Endothelial cell of umbilical vein (primary cell): ENCODE measurements at regions of chr12 and their contacts with region 1.

Region 1: GRCh38 chr12:57069523-57069922 is 9.1 kb downstream of the NEMP1 start:
- DNase-seq: peak; percentile 80
- H3K4me3 ChIP-seq: no peak overlapping the region
- H3K27ac ChIP-seq: no peak overlapping the region
- H3K4me1 ChIP-seq: no peaks in the 10 kb centered on the region
- H3K27me3 ChIP-seq: no peaks in the 10 kb centered on the region
- CTCF ChIP-seq: peak; percentile 75 to 80
- POLR2A ChIP-seq: no peak

Region 2: DNA sequence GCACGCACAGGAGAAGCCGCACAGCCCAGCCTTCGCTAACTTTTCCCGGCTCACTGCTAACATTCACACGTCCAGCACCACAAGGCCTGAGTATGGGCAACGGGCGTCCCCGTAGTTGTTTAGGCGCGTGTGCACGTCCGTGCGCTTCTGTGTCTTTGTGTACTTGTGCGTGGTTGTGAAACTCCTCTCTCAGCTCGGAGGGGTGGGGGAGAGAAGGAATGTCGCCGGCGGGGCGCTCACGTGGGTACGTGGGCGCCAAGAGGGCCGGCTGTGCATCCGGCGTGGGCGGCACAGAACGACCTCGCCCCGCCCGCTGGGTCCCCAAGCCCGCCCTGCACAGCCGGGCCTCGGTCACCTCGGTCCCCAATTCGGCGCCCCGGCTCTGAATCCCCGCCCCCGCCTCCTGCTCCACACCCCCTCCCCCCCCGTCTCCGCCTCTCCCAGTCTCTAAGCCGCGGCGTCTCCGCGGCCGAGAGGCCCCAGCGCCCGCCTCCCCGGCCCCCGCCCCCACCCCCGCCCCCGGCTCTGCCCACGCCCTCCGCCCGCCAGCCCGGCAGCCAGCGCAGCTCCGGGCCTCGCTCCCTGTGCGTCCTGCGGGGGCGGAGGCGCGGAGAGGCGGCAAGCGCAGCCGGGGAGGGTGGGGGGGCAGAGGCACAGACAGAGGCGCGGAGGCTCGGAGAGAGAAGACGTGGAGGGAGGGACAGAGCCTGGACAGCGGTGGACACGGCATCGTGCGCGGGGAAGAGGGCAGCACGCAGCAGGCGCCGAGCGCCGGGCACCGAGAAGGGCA is 19.1 kb after region 1 on chr12 and contains the start of gene NAB2:
- CTCF ChIA-PET with region 1: interaction called, 122 read pairs
- POLR2A ChIA-PET with region 1: interaction called, 3 read pairs
- dilution Hi-C with region 1: no loop called
- intact Hi-C with region 1: loop called (anchors 1 kb)
- DNase-seq: peak; percentile 89
- H3K4me3 ChIP-seq: peak within 1 kb of the TSS; percentile 41 to 86 (median 49)
- H3K27ac ChIP-seq: peak within 1 kb of the TSS; percentile 76
- H3K4me1 ChIP-seq: peaks cover 19% of the 10 kb centered on the region
- H3K27me3 ChIP-seq: no peaks in the 10 kb centered on the region
- CTCF ChIP-seq: no peak
- POLR2A ChIP-seq: peak; percentile 57
- total RNA-seq, gene NAB2: 13.4 and 15.9 TPM in 2 replicates

Region 3: DNA sequence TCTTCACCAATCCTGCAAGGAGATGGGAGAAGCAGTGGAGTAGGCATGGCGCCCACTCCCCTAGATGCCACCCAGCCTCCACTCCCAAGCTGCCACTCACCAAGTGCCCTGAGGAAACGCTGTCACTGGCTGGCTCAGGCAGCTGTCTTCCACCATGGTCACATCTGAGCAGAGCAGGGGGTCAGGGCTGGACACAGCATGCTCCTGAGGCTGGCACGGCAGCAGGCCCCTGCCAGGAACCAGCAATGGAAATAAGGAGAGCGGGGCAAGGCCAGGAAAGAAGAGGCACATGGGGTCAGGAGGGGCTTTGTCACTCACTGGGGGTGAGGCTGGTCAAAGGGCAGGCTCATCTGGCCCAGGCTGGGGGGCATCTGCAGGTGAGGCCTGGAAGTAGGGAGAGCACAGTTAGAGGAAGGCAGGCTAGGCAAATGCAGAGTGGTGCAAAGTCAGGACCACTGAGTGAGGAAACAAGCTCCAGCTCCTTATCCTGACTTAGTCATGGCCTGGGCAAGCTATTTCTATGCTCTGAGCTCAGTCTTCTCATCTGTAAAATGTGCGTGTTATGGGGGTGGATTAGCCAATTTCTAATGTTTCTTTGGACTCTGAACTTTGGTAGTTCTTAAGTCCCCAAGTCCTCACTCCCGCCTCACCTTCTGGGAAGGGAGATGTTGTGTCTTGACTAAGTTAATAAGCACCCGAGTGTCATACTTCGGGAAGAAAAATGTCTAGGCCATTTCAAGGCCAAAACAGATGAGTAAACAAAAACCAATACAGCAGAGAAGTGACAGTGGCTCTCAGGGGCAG is 27.4 kb after region 1 on chr12:
- CTCF ChIA-PET with region 1: interaction called, 122 read pairs
- POLR2A ChIA-PET with region 1: no interaction called
- dilution Hi-C with region 1: no loop called
- intact Hi-C with region 1: loop called (anchors 1 kb)
- DNase-seq: no peak
- H3K4me3 ChIP-seq: no peak overlapping the region
- H3K27ac ChIP-seq: no peak overlapping the region
- H3K4me1 ChIP-seq: peaks cover 8% of the 10 kb centered on the region
- H3K27me3 ChIP-seq: no peaks in the 10 kb centered on the region
- CTCF ChIP-seq: no peak
- POLR2A ChIP-seq: no peak

Region 4: DNA sequence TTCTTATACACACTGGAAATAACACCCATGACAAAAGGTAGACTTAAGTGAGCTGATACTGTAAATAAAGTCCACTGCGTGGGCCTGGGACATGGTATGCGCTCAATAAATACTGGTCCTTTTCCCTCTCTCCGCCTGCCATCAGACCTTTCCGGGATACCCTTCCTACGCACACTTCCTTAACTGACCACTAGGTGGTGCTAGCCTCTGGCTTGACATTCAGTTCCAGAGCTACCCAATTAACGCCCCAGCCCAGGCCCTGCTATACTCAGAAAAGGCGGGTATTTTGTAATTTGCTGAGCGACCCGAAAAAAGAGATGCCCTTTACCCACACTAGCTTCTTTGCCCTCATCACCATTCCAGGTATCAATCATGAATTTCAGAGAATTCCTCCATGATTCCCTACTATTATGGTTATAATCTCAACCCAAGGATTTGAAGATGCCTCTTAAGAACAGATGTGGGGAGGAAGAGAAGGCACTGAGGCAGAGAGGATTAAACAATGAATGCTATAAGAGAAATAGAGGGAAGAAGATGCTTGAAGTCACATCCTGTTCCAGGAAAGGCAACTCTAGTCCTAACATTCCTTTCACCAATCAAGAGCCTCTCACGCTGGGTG is 54.8 kb after region 1 on chr12:
- CTCF ChIA-PET with region 1: interaction called, 21 read pairs
- POLR2A ChIA-PET with region 1: no interaction called
- dilution Hi-C with region 1: no loop called
- intact Hi-C with region 1: no loop called
- DNase-seq: peak; percentile 65
- H3K4me3 ChIP-seq: no peak overlapping the region
- H3K27ac ChIP-seq: no peak overlapping the region
- H3K4me1 ChIP-seq: peaks cover 4% of the 10 kb centered on the region
- H3K27me3 ChIP-seq: peaks cover 17 to 32% of the 10 kb centered on the region in 2 experiments
- CTCF ChIP-seq: peak; percentile 90 to 93
- POLR2A ChIP-seq: no peak

Region 5: GRCh38 chr12:57175428-57176138 is 106.1 kb after region 1 on chr12:
- CTCF ChIA-PET with region 1: interaction called, 54 read pairs
- POLR2A ChIA-PET with region 1: no interaction called
- dilution Hi-C with region 1: no loop called
- intact Hi-C with region 1: no loop called
- DNase-seq: peak; percentile 24
- H3K4me3 ChIP-seq: no peak overlapping the region
- H3K27ac ChIP-seq: no peak overlapping the region
- H3K4me1 ChIP-seq: no peaks in the 10 kb centered on the region
- H3K27me3 ChIP-seq: no peaks in the 10 kb centered on the region
- CTCF ChIP-seq: peak; percentile 68 to 76
- POLR2A ChIP-seq: no peak

Region 6: DNA sequence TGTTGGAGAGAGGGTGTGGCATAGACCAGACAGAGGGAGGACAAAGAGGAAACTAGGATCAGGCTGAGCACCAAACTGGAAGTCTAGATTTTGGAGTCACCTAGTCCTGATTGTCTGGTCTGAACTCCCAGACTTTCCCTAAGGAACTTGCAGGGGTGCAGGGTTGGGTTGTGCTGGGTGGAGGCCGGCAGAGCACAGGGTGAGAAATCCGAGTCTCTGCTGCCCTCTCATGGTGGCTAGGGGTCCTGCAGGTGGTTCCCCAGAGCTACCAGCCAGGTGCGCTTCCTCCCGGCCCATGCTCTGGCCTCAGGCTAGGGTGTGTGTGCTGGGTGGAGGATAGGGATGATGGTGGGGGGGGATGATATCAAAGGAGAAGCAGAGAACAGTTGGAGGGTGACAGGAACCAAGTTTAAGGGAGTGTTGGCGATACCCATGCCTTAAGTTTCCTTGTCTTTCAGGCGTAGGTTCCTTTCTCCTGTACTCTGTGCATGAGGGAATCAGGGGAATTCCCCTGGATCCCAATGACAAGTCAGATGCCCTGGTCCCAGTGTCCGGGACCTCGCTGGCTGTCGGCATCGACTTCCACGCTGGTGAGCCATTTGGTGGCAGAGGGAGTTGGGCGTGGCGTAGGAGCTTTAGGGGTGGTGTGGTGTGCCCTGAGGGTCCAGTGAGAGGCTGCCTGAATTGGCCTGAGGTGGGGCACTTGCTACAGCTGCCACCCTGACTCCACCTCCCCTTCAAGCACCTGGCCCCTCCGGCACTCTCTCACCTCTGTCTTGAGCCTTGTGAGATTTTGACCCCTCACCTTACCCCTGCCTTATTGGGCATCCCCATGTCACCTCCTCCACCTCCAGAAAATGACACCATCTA is 113.6 kb after region 1 on chr12:
- CTCF ChIA-PET with region 1: interaction called, 60 read pairs
- POLR2A ChIA-PET with region 1: no interaction called
- dilution Hi-C with region 1: no loop called
- intact Hi-C with region 1: loop called (anchors 1 kb)
- DNase-seq: peak; percentile 50
- H3K4me3 ChIP-seq: no peak overlapping the region
- H3K27ac ChIP-seq: no peak overlapping the region
- H3K4me1 ChIP-seq: no peaks in the 10 kb centered on the region
- H3K27me3 ChIP-seq: peaks cover 2 to 5% of the 10 kb centered on the region in 2 experiments
- CTCF ChIP-seq: peak; percentile 92 to 94
- POLR2A ChIP-seq: no peak